Heart left ventricle (tissue), 16 donors: ENCODE measurements at regions of chr1 and their contacts with region 1.

Region 1: GRCh38 chr1:181990728-181991127 is 70.8 kb downstream of the ZNF648 start:
- DNase-seq: no peak
- ATAC-seq: no peak
- H3K4me3 ChIP-seq: no peak overlapping the region
- H3K27ac ChIP-seq: no peak overlapping the region
- H3K4me1 ChIP-seq: no peaks in the 10 kb centered on the region
- H3K27me3 ChIP-seq: peaks cover 0 to 9% (median 0%) of the 10 kb centered on the region in 9 donors
- CTCF ChIP-seq: no peak
- POLR2A ChIP-seq: no peak

Region 2: DNA sequence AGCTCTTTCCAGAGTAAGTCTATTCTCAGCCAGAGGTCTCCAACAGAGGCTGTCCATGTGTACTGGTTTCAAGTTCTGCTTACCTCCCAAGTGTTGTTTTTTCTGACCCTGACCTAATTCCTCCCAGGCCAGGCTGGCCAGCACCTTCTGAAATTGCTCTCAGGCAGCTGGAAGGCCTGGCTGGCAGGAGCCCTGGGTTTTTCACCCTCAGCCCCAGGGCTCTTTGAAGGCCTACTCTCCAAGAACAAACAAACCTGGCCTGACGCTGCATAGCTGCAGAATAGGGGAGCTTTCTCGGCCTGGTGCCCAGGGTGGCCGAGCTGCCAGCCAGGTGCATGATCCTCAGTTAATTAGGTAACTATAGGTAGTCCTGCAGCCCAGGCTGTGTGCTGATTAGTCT is 359.9 kb before region 1 on chr1:
- intact Hi-C with region 1: no loop called
- DNase-seq: no peak
- ATAC-seq: no peak
- H3K4me3 ChIP-seq: no peak overlapping the region
- H3K27ac ChIP-seq: no peak overlapping the region
- H3K4me1 ChIP-seq: no peaks in the 10 kb centered on the region
- H3K27me3 ChIP-seq: peaks cover 0 to 27% (median 0%) of the 10 kb centered on the region in 9 donors
- CTCF ChIP-seq: no peak
- POLR2A ChIP-seq: no peak

Region 3: GRCh38 chr1:181846681-181847080 is 144.0 kb before region 1 on chr1:
- intact Hi-C with region 1: no loop called
- DNase-seq: no peak
- ATAC-seq: no peak
- H3K4me3 ChIP-seq: no peak overlapping the region
- H3K27ac ChIP-seq: no peak overlapping the region
- H3K4me1 ChIP-seq: no peaks in the 10 kb centered on the region
- H3K27me3 ChIP-seq: no peaks in the 10 kb centered on the region
- CTCF ChIP-seq: no peak
- POLR2A ChIP-seq: no peak

Region 4: GRCh38 chr1:182041615-182042014 is 50.9 kb after region 1 on chr1:
- intact Hi-C with region 1: loop called in 1 of 10 experiments (anchors 10 kb)
- DNase-seq: no peak
- ATAC-seq: no peak
- H3K4me3 ChIP-seq: no peak overlapping the region
- H3K27ac ChIP-seq: no peak overlapping the region
- H3K4me1 ChIP-seq: no peaks in the 10 kb centered on the region
- H3K27me3 ChIP-seq: no peaks in the 10 kb centered on the region
- CTCF ChIP-seq: no peak
- POLR2A ChIP-seq: no peak